PC-9 (cell line): ENCODE measurements at regions of chr15 and their contacts with region 1.

Region 1: DNA sequence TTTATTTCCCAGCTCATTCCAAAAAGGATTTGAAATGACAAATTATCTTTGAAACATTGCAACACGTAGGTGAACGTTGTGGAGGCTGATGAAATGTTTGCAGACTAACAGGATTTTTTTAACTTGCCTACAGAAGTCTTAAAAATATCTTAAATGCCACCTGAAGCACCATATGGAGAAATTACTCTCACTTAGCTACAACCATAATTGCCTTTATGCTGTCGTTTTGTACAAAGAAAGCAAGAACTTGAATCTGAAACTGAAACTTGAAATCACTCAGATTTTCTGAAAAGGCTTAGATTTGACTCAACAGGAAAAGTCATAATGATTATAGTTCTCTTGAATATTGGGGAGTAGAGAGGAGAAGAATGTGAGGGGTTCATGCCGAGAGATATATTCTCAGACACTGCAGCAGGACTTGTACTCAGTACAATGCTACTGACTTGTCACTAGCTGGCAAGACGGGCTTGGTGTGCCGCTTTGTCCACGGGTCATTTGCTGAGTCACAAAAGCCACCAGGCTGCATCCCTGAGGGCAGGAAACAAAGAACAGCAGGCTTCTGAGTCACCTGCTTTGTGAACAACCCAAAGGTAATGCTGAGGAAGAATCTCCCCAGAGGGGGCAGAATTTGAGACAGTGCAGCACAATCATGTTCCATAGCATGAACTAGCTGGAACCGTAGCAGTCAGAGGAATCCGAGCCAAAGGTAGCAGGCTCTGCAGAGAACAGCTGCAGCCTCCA is 7.1 kb upstream of the FMN1 start:
- DNase-seq: peak; percentile 89 to 96
- H3K4me3 ChIP-seq: peak overlapping the region; percentile 53
- H3K27ac ChIP-seq: peak overlapping the region; percentile 99
- H3K4me1 ChIP-seq: peaks cover 41% of the 10 kb centered on the region
- H3K27me3 ChIP-seq: no peaks in the 10 kb centered on the region
- CTCF ChIP-seq: peak; percentile 58

Region 2: DNA sequence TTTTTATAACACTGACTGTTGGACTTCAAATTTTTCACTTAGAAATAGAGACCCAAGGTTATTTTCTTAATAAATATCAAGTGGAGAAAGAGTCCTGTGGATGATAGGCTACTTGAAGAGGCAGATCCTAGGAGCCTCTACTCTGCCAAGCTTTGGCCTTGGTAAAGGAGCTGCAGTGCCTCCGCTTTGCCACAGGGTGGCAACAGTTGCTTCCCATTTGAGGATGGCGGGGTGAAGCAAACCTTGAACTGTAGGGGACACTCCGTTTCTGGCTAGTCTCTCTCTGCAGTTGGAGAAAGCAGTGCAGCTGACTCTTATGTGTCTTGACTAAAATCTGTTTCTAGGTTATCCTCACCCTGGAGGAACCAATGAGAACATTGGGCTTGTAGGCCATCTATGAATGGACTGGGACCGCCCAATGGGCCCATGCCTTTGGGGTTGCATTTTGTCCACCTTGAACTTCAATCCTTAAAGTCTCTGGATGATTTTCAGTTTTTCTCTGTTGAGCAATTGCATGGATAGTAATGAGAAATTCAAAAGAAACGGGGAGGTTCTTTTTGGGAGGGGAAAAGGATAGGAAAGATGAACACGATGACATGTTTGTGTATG is 550.3 kb before region 1 on chr15:
- CTCF ChIA-PET with region 1: no interaction called
- POLR2A ChIA-PET with region 1: no interaction called
- intact Hi-C with region 1: loop called (anchors 10 kb)
- DNase-seq: peak in 1 of 2 experiments; percentile 68
- H3K4me3 ChIP-seq: no peak overlapping the region
- H3K27ac ChIP-seq: peak overlapping the region; percentile 84
- H3K4me1 ChIP-seq: peaks cover 19% of the 10 kb centered on the region
- H3K27me3 ChIP-seq: no peaks in the 10 kb centered on the region
- CTCF ChIP-seq: peak; percentile 92

Region 3: GRCh38 chr15:32774022-32774421 is 427.6 kb before region 1 on chr15:
- CTCF ChIA-PET with region 1: no interaction called
- POLR2A ChIA-PET with region 1: no interaction called
- intact Hi-C with region 1: loop called (anchors 2 kb)
- DNase-seq: peak; percentile 52 to 76
- H3K4me3 ChIP-seq: no peak overlapping the region
- H3K27ac ChIP-seq: peak overlapping the region; percentile 61
- H3K4me1 ChIP-seq: peaks cover 18% of the 10 kb centered on the region
- H3K27me3 ChIP-seq: no peaks in the 10 kb centered on the region
- CTCF ChIP-seq: no peak

Region 4: DNA sequence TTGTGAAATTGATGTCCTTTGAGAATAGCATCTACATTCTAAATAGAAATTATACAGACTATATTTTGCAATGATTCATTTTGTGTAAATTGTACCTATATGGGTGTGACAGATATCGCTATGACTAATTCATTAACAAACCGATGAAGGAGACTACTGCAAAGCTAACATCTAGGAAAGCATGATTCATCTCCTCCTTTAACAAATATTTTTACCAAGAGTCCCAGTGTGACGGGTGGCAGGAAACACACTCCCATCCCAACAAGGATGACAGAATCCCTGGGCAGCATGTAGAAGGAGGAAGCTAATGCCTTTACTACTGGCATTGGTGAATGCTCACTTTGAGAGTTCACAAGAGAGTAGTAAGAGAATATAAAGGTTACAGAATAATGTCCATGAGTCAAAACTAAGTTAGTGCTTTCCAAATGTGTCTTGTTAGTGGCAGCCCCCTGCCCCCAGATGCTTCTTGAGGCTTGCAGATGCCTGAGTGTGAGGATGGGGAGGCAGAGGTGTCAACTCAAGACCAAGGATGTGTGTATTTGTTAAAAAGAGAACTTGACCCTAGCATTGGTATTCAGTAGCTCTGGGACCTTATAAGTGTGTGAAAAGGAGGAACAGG is 187.7 kb before region 1 on chr15:
- CTCF ChIA-PET with region 1: no interaction called
- POLR2A ChIA-PET with region 1: interaction called, 7 read pairs
- intact Hi-C with region 1: loop called (anchors 10 kb)
- DNase-seq: peak; percentile 56 to 93
- H3K4me3 ChIP-seq: no peak overlapping the region
- H3K27ac ChIP-seq: peak overlapping the region; percentile 71
- H3K4me1 ChIP-seq: peaks cover 23% of the 10 kb centered on the region
- H3K27me3 ChIP-seq: no peaks in the 10 kb centered on the region
- CTCF ChIP-seq: no peak

Region 5: GRCh38 chr15:33086507-33087121 is 115.0 kb before region 1 on chr15:
- CTCF ChIA-PET with region 1: no interaction called
- POLR2A ChIA-PET with region 1: no interaction called
- intact Hi-C with region 1: no loop called
- DNase-seq: peak in 1 of 2 experiments; percentile 51
- H3K4me3 ChIP-seq: no peak overlapping the region
- H3K27ac ChIP-seq: no peak overlapping the region
- H3K4me1 ChIP-seq: peaks cover 42% of the 10 kb centered on the region
- H3K27me3 ChIP-seq: no peaks in the 10 kb centered on the region
- CTCF ChIP-seq: peak; percentile 64